ENCODE measurements at regions of chr19 and their contacts with region 1.

Region 1: DNA sequence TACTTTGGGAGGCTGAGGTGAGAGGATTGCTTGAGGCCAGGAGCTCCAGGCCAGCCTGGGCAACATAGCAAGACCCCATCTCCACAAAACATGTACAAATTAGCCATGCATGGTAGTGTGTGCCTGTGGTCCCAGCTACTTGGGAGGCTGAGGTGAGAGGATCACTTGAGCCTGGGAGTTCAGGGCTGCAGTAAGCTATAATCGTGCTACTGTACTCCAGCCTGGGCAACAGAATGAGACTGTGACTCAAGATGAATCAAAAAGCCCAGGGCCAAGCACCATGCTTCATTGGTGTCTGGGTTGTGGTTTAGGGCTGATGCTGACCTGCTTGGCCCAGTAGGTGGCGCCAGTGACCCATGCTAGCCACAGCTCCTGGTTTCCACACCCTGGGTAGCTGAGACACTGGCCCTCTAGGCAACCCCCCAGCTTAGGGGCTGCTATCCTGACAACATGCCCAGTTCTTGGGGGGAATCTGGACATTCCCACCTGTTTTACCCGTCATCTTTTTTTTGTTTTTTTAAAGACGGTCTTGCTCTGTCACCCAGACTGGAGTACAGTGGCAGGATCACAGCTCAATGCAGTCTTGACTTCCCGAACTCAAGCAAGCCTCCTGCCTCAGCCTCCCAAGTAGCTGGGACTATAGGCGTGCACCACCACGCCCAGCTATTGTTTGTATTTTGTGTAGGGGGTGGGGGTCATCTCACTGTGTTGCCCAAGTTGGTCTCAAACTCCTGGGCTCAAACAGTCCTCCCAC is 5.5 kb downstream of the CCDC124 start:
- DNase-seq: peak; percentile 91
- ATAC-seq: peak; percentile 98
- H3K4me3 Mint-ChIP-seq: no peak overlapping the region
- H3K27ac Mint-ChIP-seq: no peak overlapping the region
- H3K4me1 Mint-ChIP-seq: peaks cover 8% of the 10 kb centered on the region
- H3K27me3 Mint-ChIP-seq: no peaks in the 10 kb centered on the region
- CTCF ChIP-seq: peak; percentile 78

Region 2: DNA sequence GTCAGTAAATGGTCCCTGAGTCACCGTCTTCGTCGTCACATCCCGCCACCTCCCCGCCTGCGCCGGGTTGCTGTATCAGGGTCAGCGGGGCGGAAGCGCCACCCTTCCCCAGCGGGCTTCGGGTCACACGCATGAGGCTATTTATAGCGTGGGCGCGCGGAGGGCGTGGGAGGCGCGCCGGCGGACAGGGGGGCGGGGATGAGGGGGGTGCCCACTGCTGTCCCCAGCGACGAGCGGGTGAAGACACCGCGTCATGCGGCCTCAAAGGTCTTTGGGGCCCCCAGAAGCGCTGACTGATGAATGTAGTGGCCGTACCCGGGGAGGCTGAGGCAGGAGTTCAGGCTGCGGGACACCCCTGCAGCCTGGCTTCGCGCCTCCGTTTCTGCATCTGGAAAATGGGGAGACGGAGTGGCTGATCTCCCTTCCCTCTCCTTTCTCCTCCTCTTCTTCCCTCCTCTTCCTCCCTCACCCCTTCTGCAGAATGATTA is 258.0 kb before region 1 on chr19:
- CTCF ChIA-PET with region 1: no interaction called
- POLR2A ChIA-PET with region 1: no interaction called
- intact Hi-C with region 1: no loop called
- DNase-seq: peak; percentile 83
- ATAC-seq: peak; percentile 97
- H3K4me3 Mint-ChIP-seq: peak overlapping the region; percentile 35
- H3K27ac Mint-ChIP-seq: no peak overlapping the region
- H3K4me1 Mint-ChIP-seq: peaks cover 3% of the 10 kb centered on the region
- H3K27me3 Mint-ChIP-seq: peaks cover 53% of the 10 kb centered on the region
- CTCF ChIP-seq: no peak

Region 3: DNA sequence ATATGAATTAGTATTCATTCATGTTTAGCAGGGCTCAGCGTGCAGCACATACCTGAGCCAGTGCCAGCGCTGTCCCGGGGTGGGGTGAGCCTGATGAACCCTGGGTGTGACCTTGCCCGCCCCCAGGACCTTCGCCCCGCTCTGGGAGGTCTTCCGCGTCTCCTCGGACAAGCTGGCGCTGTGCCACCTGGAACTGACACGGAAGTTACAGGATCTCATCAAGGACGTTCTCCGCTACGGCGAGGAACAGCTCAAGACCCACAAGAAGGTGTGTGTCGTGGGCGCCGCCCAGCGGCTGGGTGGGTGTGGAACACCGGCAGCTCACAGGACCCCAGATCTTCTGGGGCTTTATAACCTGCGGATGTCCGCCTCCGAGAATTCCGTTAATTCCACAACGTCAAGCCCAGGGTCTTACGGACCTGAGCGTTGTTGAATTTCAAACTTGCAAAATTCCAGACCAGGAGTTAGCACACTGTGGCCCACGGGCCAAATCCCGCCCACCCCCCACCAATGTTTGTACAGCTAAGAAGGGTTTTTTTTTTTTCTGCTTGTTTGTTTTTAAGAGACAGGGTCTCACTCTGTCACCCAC is 171.6 kb before region 1 on chr19:
- CTCF ChIA-PET with region 1: no interaction called
- POLR2A ChIA-PET with region 1: no interaction called
- intact Hi-C with region 1: no loop called
- DNase-seq: peak; percentile 66
- ATAC-seq: peak; percentile 58
- H3K4me3 Mint-ChIP-seq: no peak overlapping the region
- H3K27ac Mint-ChIP-seq: no peak overlapping the region
- H3K4me1 Mint-ChIP-seq: peaks cover 2% of the 10 kb centered on the region
- H3K27me3 Mint-ChIP-seq: no peaks in the 10 kb centered on the region
- CTCF ChIP-seq: peak; percentile 46

Region 4: GRCh38 chr19:17803264-17803922 is 134.9 kb before region 1 on chr19:
- CTCF ChIA-PET with region 1: no interaction called
- POLR2A ChIA-PET with region 1: no interaction called
- intact Hi-C with region 1: no loop called
- DNase-seq: peak; percentile 27
- ATAC-seq: peak; percentile 29
- H3K4me3 Mint-ChIP-seq: no peak overlapping the region
- H3K27ac Mint-ChIP-seq: peak overlapping the region; percentile 5
- H3K4me1 Mint-ChIP-seq: peaks cover 20% of the 10 kb centered on the region
- H3K27me3 Mint-ChIP-seq: no peaks in the 10 kb centered on the region
- CTCF ChIP-seq: no peak

Region 5: DNA sequence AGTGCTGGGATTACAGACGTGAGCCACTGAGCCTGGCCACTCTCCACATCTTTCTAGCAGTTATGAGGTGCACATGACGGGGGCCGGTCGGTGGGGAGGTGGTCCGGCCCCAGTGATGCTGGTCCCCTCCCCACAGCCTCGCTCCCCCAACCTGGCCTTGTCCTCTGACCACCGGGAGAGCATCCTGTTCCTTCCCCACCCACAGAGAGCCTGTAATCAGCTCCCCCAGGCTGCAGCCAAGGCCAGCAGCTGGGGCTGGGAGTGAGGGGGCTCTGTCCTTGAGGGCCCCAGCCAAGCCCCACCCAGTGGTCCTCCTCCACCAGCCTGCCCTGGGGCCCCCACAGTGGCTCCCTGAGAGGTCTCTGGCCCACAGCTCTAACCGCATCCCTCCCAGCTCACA is 113.9 kb before region 1 on chr19:
- CTCF ChIA-PET with region 1: no interaction called
- POLR2A ChIA-PET with region 1: no interaction called
- intact Hi-C with region 1: no loop called
- DNase-seq: no peak
- ATAC-seq: no peak
- H3K4me3 Mint-ChIP-seq: no peak overlapping the region
- H3K27ac Mint-ChIP-seq: no peak overlapping the region
- H3K4me1 Mint-ChIP-seq: no peaks in the 10 kb centered on the region
- H3K27me3 Mint-ChIP-seq: no peaks in the 10 kb centered on the region
- CTCF ChIP-seq: no peak

Region 6: GRCh38 chr19:17953869-17954268 is 15.6 kb after region 1 on chr19:
- CTCF ChIA-PET with region 1: interaction called, 11 read pairs
- POLR2A ChIA-PET with region 1: interaction called, 3 read pairs
- intact Hi-C with region 1: no loop called
- DNase-seq: no peak
- ATAC-seq: no peak
- H3K4me3 Mint-ChIP-seq: no peak overlapping the region
- H3K27ac Mint-ChIP-seq: no peak overlapping the region
- H3K4me1 Mint-ChIP-seq: peaks cover 33% of the 10 kb centered on the region
- H3K27me3 Mint-ChIP-seq: peaks cover 47% of the 10 kb centered on the region
- CTCF ChIP-seq: no peak

Region 7: DNA sequence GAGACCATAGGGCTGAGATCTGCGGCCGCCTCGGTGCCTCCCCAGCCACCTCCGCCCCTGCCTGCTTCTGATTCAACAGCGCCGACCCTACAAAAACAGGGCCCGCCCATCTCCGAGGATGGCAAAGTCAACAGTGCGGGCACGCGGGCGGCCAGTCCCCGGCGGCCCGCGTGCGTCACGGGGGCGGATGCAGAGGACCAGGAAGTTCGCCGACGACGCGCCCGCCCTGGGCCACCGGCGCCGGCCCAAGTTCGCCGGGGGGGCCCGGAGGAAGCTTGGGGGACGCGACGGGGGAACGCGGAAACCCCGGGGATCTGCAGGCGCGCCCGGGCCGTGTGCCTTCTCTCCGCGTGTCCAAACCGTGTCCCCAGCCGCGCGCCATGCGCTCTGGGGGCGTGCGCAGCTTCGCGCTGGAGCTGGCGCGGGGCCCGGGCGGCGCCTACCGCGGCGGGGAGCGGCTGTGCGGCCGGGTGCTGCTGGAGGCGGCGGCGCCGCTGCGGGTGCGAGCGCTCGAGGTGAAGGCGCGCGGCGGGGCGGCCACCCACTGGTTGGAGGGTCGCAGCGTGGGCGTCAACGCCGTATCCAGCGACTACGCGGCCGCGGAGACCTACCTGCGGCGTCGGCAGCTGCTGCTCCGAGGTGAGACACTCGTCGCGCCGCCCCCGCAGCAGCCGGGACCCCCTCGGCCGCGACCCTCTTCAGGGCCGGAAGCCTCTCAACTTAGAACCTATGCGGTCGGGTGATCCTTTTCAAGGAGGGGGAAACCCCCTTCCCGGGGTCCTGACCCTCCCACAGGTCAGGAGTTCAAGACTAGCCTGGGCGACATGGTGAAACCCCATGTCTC is 62.9 kb after region 1 on chr19:
- CTCF ChIA-PET with region 1: interaction called, 132 read pairs
- POLR2A ChIA-PET with region 1: interaction called, 10 read pairs
- intact Hi-C with region 1: loop called (anchors 2 kb)
- DNase-seq: peak; percentile 98
- ATAC-seq: peak; percentile 86
- H3K4me3 Mint-ChIP-seq: peak overlapping the region; percentile 90
- H3K27ac Mint-ChIP-seq: peak overlapping the region; percentile 98
- H3K4me1 Mint-ChIP-seq: peaks cover 18% of the 10 kb centered on the region
- H3K27me3 Mint-ChIP-seq: no peaks in the 10 kb centered on the region
- CTCF ChIP-seq: no peak

Region 8: GRCh38 chr19:18007044-18007916 is 69.0 kb after region 1 on chr19:
- CTCF ChIA-PET with region 1: interaction called, 19 read pairs
- POLR2A ChIA-PET with region 1: no interaction called
- intact Hi-C with region 1: no loop called
- DNase-seq: peak; percentile 85
- ATAC-seq: peak; percentile 65
- H3K4me3 Mint-ChIP-seq: peak overlapping the region; percentile 77
- H3K27ac Mint-ChIP-seq: peak overlapping the region; percentile 82
- H3K4me1 Mint-ChIP-seq: peaks cover 29% of the 10 kb centered on the region
- H3K27me3 Mint-ChIP-seq: no peaks in the 10 kb centered on the region
- CTCF ChIP-seq: peak; percentile 100